CD4-positive, alpha-beta T cell (primary cell): ENCODE measurements at regions of chr15 and their contacts with region 1.

Region 1: GRCh38 chr15:84633311-84634227 is 20.5 kb downstream of the WDR73 start:
- DNase-seq: peak; percentile 43 to 85 (median 60)
- ATAC-seq: peak; percentile 41
- H3K4me3 ChIP-seq: peak overlapping the region; percentile 69
- H3K4me3 Mint-ChIP-seq: peak overlapping the region; percentile 96
- H3K27ac ChIP-seq: peak overlapping the region; percentile 29 to 61
- H3K27ac Mint-ChIP-seq: peak overlapping the region; percentile 92
- H3K4me1 ChIP-seq: peaks cover 41% of the 10 kb centered on the region
- H3K4me1 Mint-ChIP-seq: peaks cover 52% of the 10 kb centered on the region
- H3K27me3 ChIP-seq: no peaks in the 10 kb centered on the region
- H3K27me3 Mint-ChIP-seq: no peaks in the 10 kb centered on the region
- CTCF ChIP-seq: no peak

Region 2: GRCh38 chr15:84600851-84601838 is 32.4 kb before region 1 on chr15 and contains the start of gene ZSCAN2:
- CTCF ChIA-PET with region 1: interaction called, 11 read pairs
- POLR2A ChIA-PET with region 1: interaction called, 122 read pairs
- intact Hi-C with region 1: loop called (anchors 1 kb)
- DNase-seq: peak; percentile 87 to 95 (median 90)
- ATAC-seq: peak; percentile 97
- H3K4me3 ChIP-seq: peak within 1 kb of the TSS; percentile 95
- H3K4me3 Mint-ChIP-seq: peak within 1 kb of the TSS; percentile 98
- H3K27ac ChIP-seq: peak within 1 kb of the TSS in 1 of 2 donors; percentile 13
- H3K27ac Mint-ChIP-seq: peak within 1 kb of the TSS; percentile 78
- H3K4me1 ChIP-seq: peaks cover 62% of the 10 kb centered on the region
- H3K4me1 Mint-ChIP-seq: peaks cover 72% of the 10 kb centered on the region
- H3K27me3 ChIP-seq: no peaks in the 10 kb centered on the region
- H3K27me3 Mint-ChIP-seq: no peaks in the 10 kb centered on the region
- CTCF ChIP-seq: no peak
- total RNA-seq, gene ZSCAN2: 3.8 to 5.0 TPM

Region 3: GRCh38 chr15:84621358-84621979 is 12.1 kb before region 1 on chr15:
- CTCF ChIA-PET with region 1: interaction called, 3 read pairs
- POLR2A ChIA-PET with region 1: interaction called, 10 read pairs
- intact Hi-C with region 1: no loop called
- DNase-seq: no peak
- ATAC-seq: no peak
- H3K4me3 ChIP-seq: no peak overlapping the region
- H3K4me3 Mint-ChIP-seq: no peak overlapping the region
- H3K27ac ChIP-seq: no peak overlapping the region
- H3K27ac Mint-ChIP-seq: no peak overlapping the region
- H3K4me1 ChIP-seq: no peaks in the 10 kb centered on the region
- H3K4me1 Mint-ChIP-seq: no peaks in the 10 kb centered on the region
- H3K27me3 ChIP-seq: no peaks in the 10 kb centered on the region
- H3K27me3 Mint-ChIP-seq: no peaks in the 10 kb centered on the region
- CTCF ChIP-seq: no peak

Region 4: DNA sequence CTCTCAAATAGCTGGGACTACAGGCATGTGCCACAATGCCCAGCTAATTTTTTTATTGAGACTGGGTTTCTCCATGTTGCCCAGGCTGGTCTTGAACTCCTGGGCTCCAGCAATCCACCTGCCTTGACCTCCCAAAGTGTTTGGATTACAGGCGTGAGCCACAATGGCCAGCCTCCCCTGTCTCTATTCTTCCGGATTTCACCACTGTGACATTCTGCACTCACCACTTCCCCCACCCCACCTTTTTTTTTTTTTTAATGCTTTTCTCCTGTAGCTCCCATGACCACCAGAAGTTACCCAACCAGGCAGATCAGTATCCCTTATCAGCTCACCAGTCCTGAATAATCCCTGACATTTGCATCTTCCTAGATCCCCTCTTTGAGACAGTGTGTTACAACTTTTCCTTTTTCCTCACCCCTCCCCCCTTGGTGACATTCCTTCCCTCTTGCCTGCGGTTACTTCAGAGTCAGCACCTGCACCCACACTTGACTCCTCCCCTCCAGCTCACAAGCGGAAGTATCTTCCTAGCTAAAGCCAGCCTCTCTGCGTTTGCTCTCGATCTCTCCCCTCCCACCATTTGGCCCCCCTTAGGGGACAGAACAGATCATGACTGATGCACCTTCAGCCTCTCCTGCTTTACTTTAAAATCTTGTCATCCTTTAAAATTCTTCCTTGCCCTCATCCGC is 101.4 kb after region 1 on chr15:
- CTCF ChIA-PET with region 1: no interaction called
- POLR2A ChIA-PET with region 1: interaction called, 13 read pairs
- intact Hi-C with region 1: no loop called
- DNase-seq: peak; percentile 40 to 91 (median 64)
- ATAC-seq: peak; percentile 86
- H3K4me3 ChIP-seq: peak overlapping the region; percentile 34
- H3K4me3 Mint-ChIP-seq: peak overlapping the region; percentile 84
- H3K27ac ChIP-seq: peak overlapping the region; percentile 46 to 70
- H3K27ac Mint-ChIP-seq: peak overlapping the region; percentile 91
- H3K4me1 ChIP-seq: peaks cover 51% of the 10 kb centered on the region
- H3K4me1 Mint-ChIP-seq: peaks cover 51% of the 10 kb centered on the region
- H3K27me3 ChIP-seq: no peaks in the 10 kb centered on the region
- H3K27me3 Mint-ChIP-seq: no peaks in the 10 kb centered on the region
- CTCF ChIP-seq: no peak